ENCODE measurements at regions of chr13 and their contacts with region 1.

Region 1: DNA sequence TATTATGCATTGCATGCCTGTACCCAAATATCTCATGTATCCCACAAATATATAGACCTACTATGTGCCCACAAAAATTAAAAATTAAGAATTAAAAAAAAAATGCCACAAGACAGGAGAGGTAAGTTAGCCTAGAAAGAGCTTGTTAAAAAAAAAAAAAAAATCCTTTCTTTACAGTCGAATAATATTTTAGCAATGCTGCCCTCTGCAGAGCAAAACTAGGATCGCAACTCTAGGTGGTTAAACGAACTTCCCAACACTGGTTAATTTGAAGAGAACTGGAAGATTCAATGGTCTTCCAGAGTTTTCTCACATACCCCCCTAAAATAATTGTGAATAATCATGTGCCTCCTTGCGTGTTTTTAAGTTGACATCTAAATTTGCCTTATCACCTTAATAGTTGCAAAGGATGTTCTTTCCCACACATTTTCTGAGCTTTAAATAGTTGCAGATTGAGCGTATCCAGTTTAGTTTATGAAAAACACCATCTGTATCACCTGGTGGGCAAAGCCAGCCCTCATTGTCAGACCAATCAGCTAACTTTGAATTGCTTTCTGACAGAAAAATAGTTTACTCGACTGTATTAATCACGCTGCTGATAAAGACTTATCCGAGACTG is 47.4 kb upstream of the RCBTB2 start:
- DNase-seq: peak; percentile 64
- ATAC-seq: peak; percentile 35

Region 2: DNA sequence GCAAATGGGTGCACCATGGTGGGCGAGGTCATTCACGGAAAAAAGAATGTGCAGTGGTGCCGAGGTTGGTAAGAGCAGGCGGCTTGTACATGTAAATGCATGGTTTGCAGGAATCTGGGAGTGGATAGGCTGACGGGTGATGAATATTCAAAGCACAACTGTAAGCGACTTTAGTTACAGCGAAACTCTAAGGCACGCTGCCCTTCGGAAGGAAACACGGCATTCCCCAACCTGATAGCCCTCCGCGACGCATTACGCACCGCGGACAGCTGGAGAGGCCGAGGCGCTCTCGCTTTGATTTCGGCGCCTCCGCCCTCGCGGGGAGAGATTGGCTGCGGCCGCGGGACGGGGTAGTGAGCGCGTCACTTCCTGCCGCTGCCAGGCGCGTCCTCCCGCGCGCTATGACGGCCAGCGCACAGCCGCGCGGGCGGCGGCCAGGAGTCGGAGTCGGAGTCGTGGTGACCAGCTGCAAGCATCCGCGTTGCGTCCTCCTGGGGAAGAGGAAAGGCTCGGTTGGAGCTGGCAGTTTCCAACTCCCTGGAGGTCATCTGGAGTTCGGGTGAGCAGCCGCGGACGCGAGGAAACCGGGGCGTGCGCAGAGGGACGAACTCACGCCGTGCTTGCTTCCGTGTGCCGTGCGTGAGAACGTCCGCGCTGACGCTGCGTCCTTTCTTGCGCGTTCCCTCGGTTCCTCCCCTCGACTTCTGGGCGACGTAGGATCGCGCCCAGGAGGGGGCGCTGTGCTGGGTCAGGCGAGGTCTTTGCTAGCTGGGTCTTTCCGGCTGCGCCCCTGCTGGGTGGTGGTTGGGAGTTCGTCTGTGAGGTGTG is 542.7 kb before region 1 on chr13 and contains the start of gene NUDT15:
- intact Hi-C with region 1: no loop called
- DNase-seq: peak; percentile 97
- ATAC-seq: peak; percentile 99
- total RNA-seq, gene NUDT15: 11.7 TPM

Region 3: GRCh38 chr13:48334534-48335127 is 245.7 kb before region 1 on chr13:
- intact Hi-C with region 1: loop called (anchors 2 kb)
- DNase-seq: no peak
- ATAC-seq: peak; percentile 72

Region 4: DNA sequence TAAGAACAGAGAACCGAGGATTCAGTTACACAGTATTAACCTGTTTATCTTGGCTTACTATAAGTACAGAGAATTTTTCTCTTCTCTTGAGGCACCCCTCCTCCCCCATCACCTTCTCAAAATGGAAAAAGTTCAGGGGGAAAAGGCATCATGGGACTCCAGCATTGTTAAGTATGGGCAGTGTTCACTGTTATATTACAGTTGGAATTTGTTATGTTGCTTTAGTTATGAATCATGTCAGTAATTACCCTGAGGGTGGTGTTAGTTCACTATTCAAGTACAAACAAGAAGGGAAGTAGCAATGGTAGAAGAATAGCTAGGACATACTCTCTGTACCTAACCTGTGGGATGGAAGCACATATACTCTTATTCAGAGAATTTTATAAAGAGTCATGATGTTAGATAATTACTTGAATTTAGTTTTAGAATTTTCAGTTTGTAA is 179.4 kb before region 1 on chr13:
- intact Hi-C with region 1: loop called (anchors 10 kb)
- DNase-seq: no peak
- ATAC-seq: peak; percentile 80

Region 5: DNA sequence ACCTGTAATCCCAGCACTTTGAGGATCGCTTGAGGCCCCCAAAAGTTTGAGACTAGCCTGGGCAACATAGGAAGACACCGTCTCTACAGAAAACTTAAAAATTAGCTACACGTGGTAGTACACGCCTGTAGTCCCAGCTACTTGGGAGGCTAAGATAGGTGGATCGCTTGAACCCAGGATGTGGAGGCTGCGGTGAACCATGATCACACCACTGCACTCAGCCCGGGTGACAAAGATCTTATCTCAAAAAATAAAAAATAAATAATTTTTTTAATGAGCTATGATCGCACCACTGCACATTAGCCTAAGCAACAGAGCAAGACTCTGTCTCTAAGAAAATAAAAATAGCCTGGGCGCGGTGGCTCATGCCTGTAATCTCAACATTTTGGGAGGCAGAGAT is 54.0 kb before region 1 on chr13:
- intact Hi-C with region 1: loop called (anchors 10 kb)
- DNase-seq: no peak
- ATAC-seq: no peak